ENCODE measurements at regions of chr17 and their contacts with region 1.

Region 1: DNA sequence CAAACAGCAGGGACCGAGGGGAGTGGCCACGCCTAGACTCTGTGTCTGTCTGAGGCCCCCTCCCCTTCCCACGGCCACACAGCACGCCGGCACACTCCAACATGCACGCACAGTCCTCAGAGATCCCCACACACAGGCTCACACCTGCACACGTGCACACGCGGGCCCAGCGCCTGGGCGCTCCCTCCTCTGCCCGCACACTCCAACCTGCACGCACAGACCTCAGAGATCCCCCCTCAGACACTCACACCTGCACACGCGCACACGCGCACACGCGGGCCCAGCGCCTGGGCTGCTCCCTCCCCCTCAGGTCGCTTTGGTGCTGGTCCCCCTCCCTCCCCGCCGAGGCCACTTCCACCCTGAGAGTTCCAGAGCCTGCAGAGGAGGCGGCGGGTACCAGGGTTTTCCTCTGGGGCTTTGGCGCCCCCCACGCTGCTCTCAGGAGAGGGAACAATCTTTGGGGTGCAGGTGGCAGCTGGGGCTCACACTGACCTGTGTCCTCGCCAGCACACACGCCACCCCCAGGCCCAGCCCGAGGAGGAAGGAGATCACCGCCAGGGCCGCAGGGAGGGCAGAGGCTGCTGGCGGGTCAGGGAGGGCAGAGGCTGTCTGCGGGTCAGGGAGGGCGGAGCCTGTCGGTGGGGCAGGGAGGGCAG is 1.6 kb downstream of the CD7 start:
- DNase-seq: no peak
- H3K4me3 ChIP-seq: no peak overlapping the region
- CTCF ChIP-seq: no peak
- POLR2A ChIP-seq: no peak

Region 2: DNA sequence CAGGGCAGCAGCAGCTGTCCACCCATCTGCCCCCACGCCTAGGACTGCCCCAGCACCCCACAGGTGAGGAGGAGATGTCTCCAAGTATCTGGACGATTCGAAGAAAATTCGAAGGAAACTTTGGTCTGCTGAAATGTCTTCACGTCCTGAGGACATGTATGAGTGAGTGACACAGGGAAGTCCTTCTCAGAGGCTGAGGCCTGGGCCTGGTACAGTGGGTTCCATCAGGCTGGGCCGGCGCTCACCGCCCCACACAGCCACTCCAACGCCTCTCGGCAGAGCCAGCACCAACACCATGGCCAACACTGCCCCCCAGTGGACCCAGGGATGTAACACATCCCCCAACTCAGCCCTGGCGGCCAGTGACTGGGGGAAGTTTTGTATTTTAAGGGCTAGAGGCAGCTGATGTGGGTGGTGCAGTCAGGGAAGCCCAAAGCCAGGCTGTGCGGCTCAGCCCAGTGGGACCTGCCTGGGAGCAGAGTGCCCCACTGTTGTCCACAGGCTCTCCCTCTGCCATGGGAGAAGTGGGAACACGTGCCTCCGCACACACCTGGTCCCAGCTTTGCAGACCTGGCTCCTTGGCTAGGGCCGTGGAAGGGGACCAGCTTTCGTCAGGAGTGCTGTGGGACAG is 162.0 kb before region 1 on chr17:
- intact Hi-C with region 1: no loop called
- DNase-seq: peak; percentile 74 to 95
- H3K4me3 ChIP-seq: no peak overlapping the region
- CTCF ChIP-seq: peak in 1 of 3 donors; percentile 67
- POLR2A ChIP-seq: no peak

Region 3: DNA sequence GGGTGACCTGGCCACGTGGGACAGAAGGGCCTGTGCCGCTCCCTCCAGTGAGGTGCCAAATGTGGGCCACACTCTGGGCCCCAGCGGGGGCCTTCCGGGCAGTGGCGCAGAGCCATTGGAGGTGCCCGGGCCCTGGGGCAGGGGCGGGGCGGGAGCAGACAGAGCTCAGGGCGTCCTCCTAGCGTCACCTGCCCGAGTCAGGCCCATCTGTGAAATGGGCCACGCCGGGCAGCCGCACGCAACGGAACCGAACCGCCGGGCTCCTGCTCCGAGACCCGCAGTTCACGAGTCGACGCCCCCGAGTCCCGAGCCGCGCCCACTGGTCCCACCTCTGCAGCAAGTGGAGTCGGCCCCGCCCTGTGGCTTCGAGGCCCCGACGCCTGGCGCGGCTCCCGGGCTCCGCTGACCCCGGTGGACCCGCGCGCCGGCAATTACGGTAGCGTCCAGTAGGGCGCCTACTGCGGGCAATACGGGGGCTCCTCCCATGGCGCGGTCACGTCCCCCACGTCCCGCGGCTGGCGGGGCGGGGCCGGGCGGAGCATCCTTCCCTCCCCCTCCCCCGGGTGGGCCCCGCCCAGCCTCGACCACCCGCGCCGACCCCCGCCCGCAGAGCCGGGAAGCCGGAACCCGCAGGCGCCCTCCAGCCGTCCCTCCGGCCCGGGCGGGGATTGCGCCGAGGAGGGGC is 85.1 kb before region 1 on chr17:
- intact Hi-C with region 1: loop called (anchors 10 kb)
- DNase-seq: peak in 1 of 2 donors; percentile 96
- H3K4me3 ChIP-seq: peak overlapping the region; percentile 33
- CTCF ChIP-seq: peak in 1 of 3 donors; percentile 11
- POLR2A ChIP-seq: no peak

Measured in lower leg skin (tissue), 4 donors.